ENCODE measurements at regions of chr2 and their contacts with region 1.

Region 1: DNA sequence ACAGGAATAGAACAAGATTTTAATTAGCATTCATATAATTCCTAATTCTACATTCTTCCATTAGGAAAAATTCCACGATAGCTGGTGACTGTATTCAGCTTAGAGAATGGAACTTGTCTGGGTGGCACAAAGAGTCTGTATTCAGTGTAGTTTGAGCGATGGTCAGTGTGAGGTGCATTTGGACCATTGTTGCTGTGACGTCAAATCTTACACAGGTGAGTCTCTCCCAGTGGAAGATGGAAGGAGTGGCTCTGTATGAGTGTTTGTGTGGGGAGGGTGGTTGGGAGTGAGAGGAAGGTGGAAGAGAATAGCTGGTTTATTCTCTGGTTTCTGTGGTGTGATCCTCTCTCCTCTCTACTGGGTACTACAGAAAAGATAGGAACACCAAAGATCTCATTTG is 1038.6 kb downstream of the CNTNAP5 start:
- DNase-seq: no peak
- ATAC-seq: no peak
- H3K4me3 ChIP-seq: no peak overlapping the region
- H3K27ac ChIP-seq: no peak overlapping the region
- H3K4me1 ChIP-seq: no peaks in the 10 kb centered on the region
- H3K27me3 ChIP-seq: no peaks in the 10 kb centered on the region
- CTCF ChIP-seq: no peak

Region 2: DNA sequence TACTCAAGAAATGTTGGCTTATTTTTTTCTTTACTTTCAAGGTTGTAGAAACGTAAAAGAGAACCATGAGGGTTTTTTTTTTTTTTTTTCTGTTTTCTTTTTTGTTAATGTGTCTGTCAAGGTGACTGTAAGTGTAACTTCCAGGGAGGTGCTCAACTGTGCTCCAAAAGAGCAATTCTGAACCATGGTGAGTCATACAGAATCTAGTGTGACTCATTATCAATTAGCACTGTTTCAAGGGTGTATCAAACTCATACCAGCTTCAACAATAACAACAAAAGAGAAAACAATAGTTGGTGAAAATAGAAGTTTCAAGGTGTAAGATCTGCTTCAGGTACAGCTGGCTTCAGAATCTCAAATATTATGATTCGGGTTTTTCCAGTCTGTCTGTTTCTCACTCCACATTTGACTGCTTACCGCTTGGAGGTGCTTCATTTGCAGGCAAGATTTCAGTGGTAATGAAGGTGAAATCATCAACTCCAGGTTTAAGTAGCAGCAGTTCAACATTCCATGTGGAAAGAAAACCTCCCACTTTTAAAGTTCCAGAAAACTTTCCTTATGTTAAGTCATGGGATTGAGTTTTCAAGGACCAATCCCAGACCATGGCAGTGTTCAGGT is 187.9 kb before region 1 on chr2:
- intact Hi-C with region 1: no loop called
- DNase-seq: no peak
- ATAC-seq: no peak
- H3K4me3 ChIP-seq: no peak overlapping the region
- H3K27ac ChIP-seq: no peak overlapping the region
- H3K4me1 ChIP-seq: no peaks in the 10 kb centered on the region
- H3K27me3 ChIP-seq: no peaks in the 10 kb centered on the region
- CTCF ChIP-seq: no peak

Region 3: DNA sequence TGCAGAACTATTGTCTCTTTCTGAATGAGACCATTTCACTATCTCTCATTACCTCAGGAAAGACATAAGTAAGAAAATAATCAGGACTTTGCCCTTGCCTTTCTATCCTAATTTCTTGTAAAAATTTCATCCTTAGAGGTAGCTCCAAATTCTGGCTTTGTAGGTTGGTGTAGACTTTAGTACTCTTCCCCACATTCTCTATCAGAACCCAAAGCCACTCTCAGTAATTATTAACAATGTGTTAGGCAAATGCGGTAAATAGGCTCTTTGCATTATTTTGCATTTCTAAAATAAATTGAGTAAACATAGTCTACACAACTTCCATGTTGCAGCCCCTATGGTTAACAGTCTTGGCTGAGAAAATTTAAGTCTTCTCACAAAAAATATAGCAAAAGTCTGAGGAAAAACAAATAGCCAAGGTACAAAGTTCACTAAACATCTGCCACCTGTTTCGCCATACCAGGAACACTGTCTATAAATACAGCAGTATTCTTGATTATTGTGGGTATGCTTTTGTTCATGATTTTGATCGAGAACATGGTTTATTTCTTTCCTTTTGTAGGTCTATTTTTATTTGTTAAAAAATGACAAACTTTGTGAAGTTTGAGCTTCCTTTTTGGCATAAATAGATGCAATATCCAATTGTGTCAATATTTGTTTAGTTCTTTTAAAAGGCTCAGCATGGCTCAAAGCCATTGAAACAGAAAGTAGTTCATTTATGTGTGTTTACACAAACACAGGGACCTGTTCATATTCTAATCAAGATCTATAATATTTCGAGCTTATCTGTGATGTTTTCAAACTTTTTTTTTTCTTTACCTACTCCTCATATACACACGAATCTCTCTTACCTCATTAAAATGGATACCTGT is 22.9 kb after region 1 on chr2:
- intact Hi-C with region 1: loop called in 1 of 10 experiments (anchors 1 kb)
- DNase-seq: no peak
- ATAC-seq: no peak
- H3K4me3 ChIP-seq: no peak overlapping the region
- H3K27ac ChIP-seq: no peak overlapping the region
- H3K4me1 ChIP-seq: no peaks in the 10 kb centered on the region
- H3K27me3 ChIP-seq: no peaks in the 10 kb centered on the region
- CTCF ChIP-seq: no peak

Measured in heart right ventricle (tissue), 16 donors.